ENCODE measurements at regions of chr20 and their contacts with region 1.

Region 1: GRCh38 chr20:40956542-40957264 is 71.9 kb upstream of the TOP1 start:
- DNase-seq: no peak
- ATAC-seq: no peak
- H3K4me3 ChIP-seq: no peak overlapping the region
- H3K27ac ChIP-seq: no peak overlapping the region
- H3K4me1 ChIP-seq: no peaks in the 10 kb centered on the region
- H3K27me3 ChIP-seq: no peaks in the 10 kb centered on the region
- CTCF ChIP-seq: no peak

Region 2: GRCh38 chr20:40282541-40282940 is 674.2 kb before region 1 on chr20:
- CTCF ChIA-PET with region 1: no interaction called
- POLR2A ChIA-PET with region 1: no interaction called
- in situ Hi-C with region 1: no loop called
- intact Hi-C with region 1: loop called (anchors 5 kb)
- DNase-seq: no peak
- ATAC-seq: no peak
- H3K4me3 ChIP-seq: no peak overlapping the region
- H3K27ac ChIP-seq: no peak overlapping the region
- H3K4me1 ChIP-seq: no peaks in the 10 kb centered on the region
- H3K27me3 ChIP-seq: no peaks in the 10 kb centered on the region
- CTCF ChIP-seq: no peak

Measured in Panc1 (cell line).